Activated B cell treated with CpG ODN at 0.5 μM for 24 hours (primary cell): ENCODE measurements at regions of chr6 and their contacts with region 1.

Region 1: DNA sequence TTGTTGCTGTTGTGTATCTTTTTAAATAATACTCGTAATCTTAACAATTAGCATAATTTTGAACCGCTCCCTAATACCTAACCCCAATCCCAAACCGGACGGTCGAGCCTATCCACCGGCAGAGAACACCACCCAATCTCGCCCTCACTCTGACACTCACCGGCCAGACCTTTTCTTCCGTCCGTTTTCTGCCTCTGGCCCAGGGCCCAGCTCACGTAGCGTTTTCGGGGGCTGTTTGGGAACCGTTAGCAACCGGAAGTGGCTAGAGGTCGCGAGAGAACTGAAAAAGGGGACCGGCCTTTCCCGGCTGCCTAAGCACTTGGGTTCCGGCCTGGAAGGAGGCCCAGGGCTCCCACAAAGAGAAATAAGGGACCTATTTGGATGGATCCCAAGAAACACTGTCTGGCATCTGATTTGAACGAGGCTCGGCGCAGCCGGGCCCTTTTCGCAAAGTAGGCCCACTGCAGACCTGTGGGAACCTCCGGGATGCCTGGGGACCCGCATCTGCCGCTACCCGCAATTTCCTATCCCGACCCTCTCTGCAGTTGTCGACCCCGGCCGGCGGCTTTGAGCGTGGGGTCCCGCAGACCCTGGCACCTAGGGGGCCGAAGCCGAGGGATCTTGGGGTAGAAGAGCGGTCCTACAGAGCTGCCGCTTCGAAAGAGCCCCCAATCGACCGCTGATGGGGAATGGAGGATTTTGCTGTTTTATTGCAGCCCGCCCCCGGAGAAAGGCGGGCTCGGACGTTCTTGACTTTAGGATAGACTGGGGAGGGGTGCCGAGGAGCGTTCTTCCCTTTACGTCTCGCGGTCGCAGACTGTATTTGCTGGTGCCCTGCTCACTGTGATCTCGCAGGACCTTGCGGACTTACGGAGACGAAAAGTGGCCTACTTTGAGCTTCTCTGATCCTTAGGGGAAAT is 4.8 kb upstream of the ZKSCAN8 start:
- DNase-seq: peak; percentile 69
- ATAC-seq: peak; percentile 42
- H3K4me3 Mint-ChIP-seq: peak overlapping the region; percentile 98
- H3K27ac Mint-ChIP-seq: peak overlapping the region; percentile 100
- H3K4me1 Mint-ChIP-seq: peaks cover 76% of the 10 kb centered on the region
- H3K27me3 Mint-ChIP-seq: no peaks in the 10 kb centered on the region
- CTCF ChIP-seq: no peak

Region 2: DNA sequence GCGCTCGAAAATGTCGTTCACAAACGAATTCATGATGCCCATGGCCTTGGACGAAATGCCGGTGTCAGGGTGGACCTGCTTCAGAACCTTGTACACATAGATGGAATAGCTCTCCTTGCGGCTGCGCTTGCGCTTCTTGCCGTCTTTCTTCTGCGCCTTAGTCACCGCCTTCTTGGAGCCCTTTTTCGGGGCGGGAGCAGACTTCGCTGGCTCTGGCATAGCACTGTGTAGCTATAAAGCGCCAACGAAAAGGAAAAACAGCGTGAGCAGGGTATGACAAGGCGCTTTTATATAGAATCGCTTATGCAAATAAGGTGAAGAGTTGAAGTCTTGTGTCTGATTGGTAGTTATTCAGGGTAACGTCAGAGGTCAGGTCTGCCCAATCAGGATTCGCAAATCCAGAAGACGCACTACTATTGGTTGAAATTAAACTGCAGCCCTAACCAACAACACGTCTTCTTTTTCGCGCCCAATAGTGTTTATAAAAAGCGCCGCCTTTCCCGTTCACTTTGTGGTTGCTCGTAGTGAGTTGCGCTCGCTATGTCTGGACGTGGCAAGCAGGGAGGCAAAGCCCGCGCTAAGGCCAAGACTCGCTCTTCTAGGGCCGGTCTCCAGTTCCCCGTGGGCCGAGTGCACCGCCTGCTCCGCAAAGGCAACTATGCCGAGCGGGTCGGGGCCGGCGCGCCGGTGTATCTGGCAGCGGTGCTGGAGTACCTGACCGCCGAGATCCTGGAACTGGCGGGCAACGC is 1004.1 kb before region 1 on chr6:
- CTCF ChIA-PET with region 1: no interaction called
- POLR2A ChIA-PET with region 1: no interaction called
- intact Hi-C with region 1: loop called (anchors 5 kb)
- DNase-seq: peak; percentile 77
- ATAC-seq: peak; percentile 84
- H3K4me3 Mint-ChIP-seq: no peak overlapping the region
- H3K27ac Mint-ChIP-seq: no peak overlapping the region
- H3K4me1 Mint-ChIP-seq: peaks cover 14% of the 10 kb centered on the region
- H3K27me3 Mint-ChIP-seq: no peaks in the 10 kb centered on the region
- CTCF ChIP-seq: no peak

Region 3: GRCh38 chr6:28080631-28081485 is 56.0 kb before region 1 on chr6:
- CTCF ChIA-PET with region 1: no interaction called
- POLR2A ChIA-PET with region 1: interaction called, 28 read pairs
- intact Hi-C with region 1: loop called (anchors 1 kb)
- DNase-seq: peak; percentile 89
- ATAC-seq: peak; percentile 68
- H3K4me3 Mint-ChIP-seq: peak overlapping the region; percentile 98
- H3K27ac Mint-ChIP-seq: peak overlapping the region; percentile 97
- H3K4me1 Mint-ChIP-seq: peaks cover 52% of the 10 kb centered on the region
- H3K27me3 Mint-ChIP-seq: no peaks in the 10 kb centered on the region
- CTCF ChIP-seq: no peak

Region 4: DNA sequence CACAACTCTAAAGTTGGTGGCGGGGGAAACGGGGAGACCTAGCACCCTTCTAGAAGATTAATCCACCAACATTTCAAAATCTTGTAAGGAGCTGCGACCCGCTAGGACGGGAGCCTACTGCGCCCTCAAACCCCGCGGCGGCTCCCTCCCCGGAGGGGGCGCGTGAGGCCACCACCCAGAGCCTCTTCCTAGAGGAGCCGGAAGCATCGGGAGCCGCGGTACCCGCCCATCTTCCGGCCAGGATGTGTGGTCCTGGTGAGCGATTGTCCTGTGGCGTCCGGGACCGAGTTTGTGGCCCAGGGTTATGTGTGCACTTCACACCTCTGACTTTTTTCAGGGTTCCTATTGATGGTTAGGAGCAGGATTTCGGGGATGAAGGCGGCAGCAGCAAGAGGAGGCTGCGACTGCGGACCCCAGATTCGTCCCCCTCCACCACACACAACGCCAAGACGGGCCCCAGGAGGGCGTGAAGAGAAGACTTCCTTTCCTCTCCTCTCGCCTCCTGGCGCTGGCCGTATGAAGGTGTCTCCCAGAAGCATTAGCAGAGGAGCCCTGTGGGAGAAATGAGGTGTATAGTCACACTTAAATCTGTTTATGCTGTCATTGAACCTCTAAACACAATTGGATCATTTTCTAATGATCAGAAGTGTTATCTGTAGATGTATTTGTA is 45.8 kb before region 1 on chr6:
- CTCF ChIA-PET with region 1: no interaction called
- POLR2A ChIA-PET with region 1: no interaction called
- intact Hi-C with region 1: no loop called
- DNase-seq: no peak
- ATAC-seq: no peak
- H3K4me3 Mint-ChIP-seq: peak overlapping the region; percentile 33
- H3K27ac Mint-ChIP-seq: no peak overlapping the region
- H3K4me1 Mint-ChIP-seq: peaks cover 3% of the 10 kb centered on the region
- H3K27me3 Mint-ChIP-seq: no peaks in the 10 kb centered on the region
- CTCF ChIP-seq: no peak

Region 5: DNA sequence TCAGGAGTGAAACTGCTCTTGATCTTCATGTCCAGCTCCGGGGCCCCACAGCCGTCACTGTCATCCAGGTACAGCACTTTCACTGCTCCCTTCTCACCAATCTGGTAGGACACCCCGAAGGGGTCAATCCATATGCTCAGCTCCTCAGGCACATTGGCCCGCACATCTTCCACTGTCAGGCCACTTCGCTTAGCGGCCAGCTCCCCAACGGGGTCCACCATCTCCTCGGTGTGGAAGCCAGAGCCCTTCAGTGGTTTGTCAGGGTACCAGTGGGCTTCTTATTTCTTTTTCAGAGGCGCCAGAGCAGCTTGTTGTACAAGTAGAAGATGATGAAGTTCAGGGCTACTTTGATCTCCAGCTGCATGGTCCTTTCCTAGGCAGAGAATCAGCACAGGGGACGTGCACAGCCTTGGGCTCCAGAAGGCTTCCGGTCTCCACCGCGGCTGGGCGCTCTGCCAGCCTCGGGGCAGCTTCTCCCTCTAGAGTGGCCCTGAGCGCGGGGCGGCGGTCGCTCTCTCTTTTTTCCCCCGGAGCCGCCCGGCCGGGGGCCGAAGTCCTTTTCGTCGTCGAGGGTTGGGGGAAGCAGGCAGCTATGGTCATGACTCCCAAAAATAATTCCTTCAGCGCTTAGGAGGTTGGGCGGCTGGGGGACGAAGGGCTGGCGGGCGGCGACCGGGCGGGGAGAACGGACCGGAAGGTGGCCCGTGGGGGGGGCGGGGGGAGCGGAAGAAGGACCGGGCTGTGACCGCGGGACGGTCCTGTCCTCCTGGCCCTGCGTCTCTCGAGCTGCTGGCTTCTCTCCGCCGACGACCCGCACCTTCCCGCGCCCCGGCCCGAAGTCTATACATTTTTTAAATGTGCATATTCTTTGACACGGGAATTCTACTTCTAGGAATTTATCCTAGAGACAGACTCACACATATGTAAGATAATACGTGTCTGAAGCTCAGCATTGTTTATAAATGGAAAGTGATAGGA is 81.7 kb after region 1 on chr6:
- CTCF ChIA-PET with region 1: no interaction called
- POLR2A ChIA-PET with region 1: interaction called, 17 read pairs
- intact Hi-C with region 1: no loop called
- DNase-seq: peak; percentile 44
- ATAC-seq: peak; percentile 82
- H3K4me3 Mint-ChIP-seq: peak overlapping the region; percentile 89
- H3K27ac Mint-ChIP-seq: no peak overlapping the region
- H3K4me1 Mint-ChIP-seq: peaks cover 13% of the 10 kb centered on the region
- H3K27me3 Mint-ChIP-seq: peaks cover 54% of the 10 kb centered on the region
- CTCF ChIP-seq: no peak

Region 6: GRCh38 chr6:28335564-28336283 is 198.9 kb after region 1 on chr6 and contains the start of gene ZSCAN31:
- CTCF ChIA-PET with region 1: no interaction called
- POLR2A ChIA-PET with region 1: interaction called, 7 read pairs
- intact Hi-C with region 1: loop called (anchors 1 kb)
- DNase-seq: peak; percentile 61
- ATAC-seq: peak; percentile 93
- H3K4me3 Mint-ChIP-seq: no peak within 1 kb of the TSS
- H3K27ac Mint-ChIP-seq: no peak within 1 kb of the TSS
- H3K4me1 Mint-ChIP-seq: no peaks in the 10 kb centered on the region
- H3K27me3 Mint-ChIP-seq: no peaks in the 10 kb centered on the region
- CTCF ChIP-seq: no peak
- total RNA-seq, gene ZSCAN31: 1.0 and 3.6 TPM in 2 replicates

Region 7: DNA sequence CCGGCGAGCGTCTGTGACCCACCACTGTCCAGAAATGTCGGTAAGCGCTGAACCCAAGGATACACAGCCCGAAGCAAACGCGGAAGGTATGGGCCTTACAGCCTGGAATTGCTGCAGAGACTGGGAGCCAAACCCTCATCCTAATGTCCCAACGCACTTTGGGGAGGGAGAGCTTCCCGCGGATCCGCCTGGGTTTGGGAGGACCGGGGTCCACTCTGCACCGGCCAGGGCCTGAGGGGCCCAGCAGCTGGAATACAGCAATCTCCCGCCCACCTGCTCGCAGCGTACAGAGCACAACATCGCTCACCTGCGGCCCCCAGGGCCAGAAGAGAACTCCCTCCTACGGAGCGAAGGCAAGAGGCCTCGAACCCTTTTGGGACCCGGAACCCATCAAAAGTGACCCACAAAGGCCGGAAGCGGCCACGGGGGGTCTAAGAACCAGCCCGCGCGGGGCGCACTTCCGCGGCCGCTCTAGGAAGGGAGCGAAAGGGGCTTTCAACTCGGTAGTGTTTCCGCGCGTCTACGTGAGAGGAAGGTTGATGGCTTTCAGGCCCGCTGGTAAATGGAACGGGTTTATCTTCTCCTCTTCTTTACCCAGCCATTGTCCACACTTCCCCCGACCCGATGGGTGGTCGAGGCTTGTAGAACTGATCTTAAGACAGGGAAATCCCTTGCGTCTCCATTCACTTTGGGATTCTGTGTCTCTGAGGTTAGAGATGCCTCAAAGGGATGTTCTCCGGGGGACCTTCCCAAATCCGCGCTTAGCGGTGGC is 262.7 kb after region 1 on chr6 and contains the start of gene ZSCAN12:
- CTCF ChIA-PET with region 1: no interaction called
- POLR2A ChIA-PET with region 1: interaction called, 10 read pairs
- intact Hi-C with region 1: loop called (anchors 1 kb)
- DNase-seq: peak; percentile 79
- ATAC-seq: peak; percentile 89
- H3K4me3 Mint-ChIP-seq: peak within 1 kb of the TSS; percentile 97
- H3K27ac Mint-ChIP-seq: peak within 1 kb of the TSS; percentile 95
- H3K4me1 Mint-ChIP-seq: peaks cover 42% of the 10 kb centered on the region
- H3K27me3 Mint-ChIP-seq: peaks cover 34% of the 10 kb centered on the region
- CTCF ChIP-seq: no peak
- total RNA-seq, gene ZSCAN12: 12.8 and 13.0 TPM in 2 replicates